Activated CD4-positive, alpha-beta T cell treated with anti-CD3 and anti-CD28 coated beads, Interleukin-2, amount 10 ng/mL, durations not matched to agents 24 days and 14 days (primary cell): ENCODE measurements at regions of chr18 and their contacts with region 1.

Region 1: DNA sequence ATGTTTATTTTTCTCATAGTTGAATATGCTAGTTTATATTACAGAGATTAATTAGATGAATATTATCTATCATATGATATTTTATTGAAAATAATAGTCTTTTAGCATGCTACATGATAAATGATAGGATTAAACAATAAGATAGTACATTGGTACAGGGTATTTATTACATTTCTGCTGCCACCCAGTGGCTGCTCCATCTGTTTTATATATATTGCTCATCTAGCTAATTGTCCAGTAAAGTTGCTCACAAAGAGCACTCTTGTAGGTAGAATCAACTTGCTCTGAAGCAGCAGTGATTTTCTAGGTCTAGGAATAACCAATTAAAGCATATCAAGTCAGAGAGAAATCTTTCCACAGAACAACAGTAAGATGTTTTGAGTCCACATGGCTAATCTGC is 183.3 kb downstream of the ASXL3 start:
- DNase-seq: no peak
- H3K4me3 Mint-ChIP-seq: no peak overlapping the region
- H3K27ac Mint-ChIP-seq: no peak overlapping the region
- H3K4me1 Mint-ChIP-seq: no peaks in the 10 kb centered on the region
- H3K27me3 Mint-ChIP-seq: no peaks in the 10 kb centered on the region

Region 2: DNA sequence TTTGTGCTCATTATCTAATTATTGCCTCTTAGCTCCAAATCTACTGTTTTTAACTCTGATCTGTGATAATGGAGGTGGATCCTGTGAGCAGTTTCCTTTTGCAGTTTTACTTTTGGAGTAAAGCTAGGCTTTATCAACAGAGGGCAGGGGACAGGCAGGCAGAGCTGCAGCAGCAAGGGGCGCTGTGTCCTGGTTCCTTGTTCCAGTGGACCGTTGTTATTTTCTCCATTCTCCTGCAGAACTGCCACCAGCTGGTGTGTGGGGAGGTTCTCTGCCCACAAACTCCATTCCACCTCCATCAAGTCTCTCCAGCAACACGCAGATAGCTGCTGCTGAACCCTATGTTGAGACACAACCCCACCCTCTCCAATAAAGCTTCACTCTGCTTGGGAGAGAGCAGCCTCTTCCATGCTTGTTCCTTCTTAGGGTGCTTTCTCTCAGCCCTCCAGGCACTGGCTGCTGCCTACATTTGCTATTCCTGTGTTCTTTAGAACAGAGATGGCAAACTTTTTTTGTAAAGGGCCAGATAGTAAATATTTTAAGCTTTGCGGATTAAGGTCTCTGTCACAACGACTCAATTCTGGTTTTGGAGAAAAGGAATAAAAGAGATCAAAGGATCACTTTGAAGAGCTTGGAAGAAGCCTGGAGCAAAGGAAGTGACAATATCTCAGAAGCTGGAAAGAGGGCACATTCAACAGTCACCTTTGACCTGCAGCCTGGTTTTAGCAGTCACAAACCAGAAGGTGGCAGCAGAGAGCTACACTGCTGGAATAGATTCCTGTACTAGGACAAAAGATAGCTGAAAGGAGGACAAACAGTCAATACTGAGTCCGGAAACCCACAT is 529.7 kb before region 1 on chr18:
- intact Hi-C with region 1: loop called (anchors 10 kb)
- DNase-seq: peak; percentile 88
- H3K4me3 Mint-ChIP-seq: no peak overlapping the region
- H3K27ac Mint-ChIP-seq: no peak overlapping the region
- H3K4me1 Mint-ChIP-seq: no peaks in the 10 kb centered on the region
- H3K27me3 Mint-ChIP-seq: no peaks in the 10 kb centered on the region

Region 3: DNA sequence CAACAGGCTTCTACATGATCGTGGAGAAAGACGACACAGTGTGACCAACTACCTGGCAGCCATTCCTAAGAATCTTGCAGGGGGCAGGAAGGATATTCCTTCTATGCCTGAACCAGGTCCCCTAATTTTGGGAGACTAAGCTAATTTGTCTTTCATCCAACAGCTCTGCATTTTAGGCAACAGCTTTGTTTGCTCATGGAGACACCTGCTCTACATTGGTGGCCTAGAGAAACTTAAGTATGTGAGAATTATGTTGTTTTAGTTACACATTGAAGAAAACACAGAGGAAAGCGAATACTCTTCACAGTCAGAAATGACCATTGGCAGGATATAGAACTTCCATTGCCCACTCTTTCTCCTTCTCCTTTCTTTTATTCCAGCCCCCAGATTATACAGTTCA is 108.1 kb before region 1 on chr18:
- intact Hi-C with region 1: no loop called
- DNase-seq: no peak
- H3K4me3 Mint-ChIP-seq: no peak overlapping the region
- H3K27ac Mint-ChIP-seq: no peak overlapping the region
- H3K4me1 Mint-ChIP-seq: no peaks in the 10 kb centered on the region
- H3K27me3 Mint-ChIP-seq: no peaks in the 10 kb centered on the region

Region 4: DNA sequence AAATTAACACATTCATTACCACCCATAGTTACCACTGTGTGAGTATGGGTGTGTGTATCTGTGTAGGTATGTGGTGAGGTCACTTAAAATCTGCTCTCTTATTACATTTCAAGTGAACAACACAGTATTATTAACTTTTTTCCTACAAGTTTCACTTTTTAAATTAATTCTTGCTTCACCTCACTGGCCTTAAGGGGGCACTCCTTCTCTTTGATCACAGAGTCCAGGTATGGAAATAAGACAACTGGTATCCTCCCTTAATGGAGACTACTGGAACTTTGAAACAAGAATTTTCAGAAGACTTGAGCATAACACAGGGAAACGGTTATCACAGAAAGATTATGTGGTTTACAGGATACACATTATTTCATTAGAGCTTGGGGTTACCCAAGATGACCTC is 72.5 kb after region 1 on chr18:
- intact Hi-C with region 1: no loop called
- DNase-seq: no peak
- H3K4me3 Mint-ChIP-seq: no peak overlapping the region
- H3K27ac Mint-ChIP-seq: no peak overlapping the region
- H3K4me1 Mint-ChIP-seq: no peaks in the 10 kb centered on the region
- H3K27me3 Mint-ChIP-seq: no peaks in the 10 kb centered on the region

Region 5: GRCh38 chr18:34039201-34039600 is 277.8 kb after region 1 on chr18:
- intact Hi-C with region 1: no loop called
- DNase-seq: no peak
- H3K4me3 Mint-ChIP-seq: no peak overlapping the region
- H3K27ac Mint-ChIP-seq: no peak overlapping the region
- H3K4me1 Mint-ChIP-seq: peaks cover 2% of the 10 kb centered on the region
- H3K27me3 Mint-ChIP-seq: no peaks in the 10 kb centered on the region